ENCODE measurements at regions of chr3 and their contacts with region 1.

Region 1: DNA sequence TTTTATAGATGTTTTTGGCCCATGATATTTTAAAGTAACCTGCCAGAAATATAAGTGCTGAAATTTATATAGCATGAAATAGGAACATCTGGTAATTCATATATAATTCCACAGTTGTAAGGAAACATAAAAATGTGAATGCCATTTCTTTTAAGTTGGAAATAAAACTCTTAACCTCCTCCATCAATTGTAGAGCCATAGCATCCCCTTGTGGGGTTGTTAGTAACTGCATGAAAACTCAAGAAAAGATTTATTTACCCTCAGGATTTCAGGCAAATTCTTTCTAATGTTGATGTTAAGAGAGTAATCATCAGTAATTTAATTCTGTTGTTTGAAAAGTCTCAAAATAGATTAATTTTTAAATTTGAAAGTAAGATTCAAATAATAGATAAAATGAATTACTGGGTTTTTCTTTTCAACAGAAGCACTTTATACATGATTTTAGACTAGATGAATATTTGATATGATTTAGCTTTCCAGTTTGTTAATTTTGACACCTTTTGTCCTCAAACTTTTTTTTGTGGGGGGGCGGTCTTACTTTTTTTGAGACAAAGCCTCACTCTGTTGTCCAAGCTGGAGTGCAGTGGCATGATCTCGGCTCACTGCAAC is 74.7 kb downstream of the RASA2 start:
- DNase-seq: peak; percentile 36

Region 2: DNA sequence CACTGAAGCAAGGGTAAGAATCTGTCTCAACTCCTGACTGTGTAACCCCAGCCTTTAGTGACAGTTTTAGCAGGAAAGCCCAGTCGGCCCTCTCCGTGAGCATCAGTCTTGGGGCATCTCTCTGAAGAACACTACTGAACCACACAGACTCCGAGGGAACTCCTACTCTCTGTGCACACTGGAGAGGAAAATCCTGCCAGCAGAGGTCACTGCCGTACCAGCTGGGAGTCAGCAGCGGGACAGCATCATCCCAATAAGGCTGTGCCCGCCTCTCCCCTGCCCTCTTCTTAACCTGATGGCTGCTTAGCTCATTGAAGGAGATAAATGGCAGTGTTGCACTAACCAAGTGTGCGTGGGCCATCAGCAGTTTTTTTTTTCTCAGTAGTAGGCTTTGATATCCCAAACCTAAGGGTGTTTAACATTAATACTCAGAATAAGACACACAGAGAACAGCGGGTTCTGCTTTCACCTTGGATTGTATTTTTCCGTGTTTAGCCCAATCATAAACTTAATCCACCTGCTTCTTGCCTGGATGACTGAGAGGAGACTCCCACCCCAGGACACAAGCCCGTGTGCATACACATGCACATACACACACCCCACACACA is 101.3 kb before region 1 on chr3:
- CTCF ChIA-PET with region 1: interaction called, 28 read pairs
- POLR2A ChIA-PET with region 1: no interaction called
- DNase-seq: peak; percentile 86

Region 3: GRCh38 chr3:141487521-141488252 is 73.8 kb before region 1 on chr3:
- CTCF ChIA-PET with region 1: no interaction called
- POLR2A ChIA-PET with region 1: interaction called, 12 read pairs
- DNase-seq: peak; percentile 69

Region 4: DNA sequence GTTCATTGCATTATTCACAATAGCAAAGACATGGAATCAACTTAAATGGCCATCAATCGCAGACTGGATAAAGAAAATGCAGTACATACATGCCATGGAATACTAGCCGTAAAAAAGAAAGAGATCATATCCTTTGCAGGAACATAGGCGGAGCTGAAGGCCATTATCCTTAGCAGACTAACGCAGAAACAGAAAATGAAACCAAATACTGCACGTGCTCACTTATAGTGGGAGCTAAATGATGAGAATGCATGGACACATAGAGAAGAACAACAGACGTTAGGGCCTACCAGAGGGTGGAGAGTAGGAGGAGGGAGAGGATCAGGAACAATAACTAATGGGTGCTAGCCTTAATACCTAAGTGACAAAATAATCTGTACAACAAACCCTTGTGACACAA is 16.8 kb before region 1 on chr3:
- CTCF ChIA-PET with region 1: no interaction called
- POLR2A ChIA-PET with region 1: no interaction called
- DNase-seq: no peak

Region 5: DNA sequence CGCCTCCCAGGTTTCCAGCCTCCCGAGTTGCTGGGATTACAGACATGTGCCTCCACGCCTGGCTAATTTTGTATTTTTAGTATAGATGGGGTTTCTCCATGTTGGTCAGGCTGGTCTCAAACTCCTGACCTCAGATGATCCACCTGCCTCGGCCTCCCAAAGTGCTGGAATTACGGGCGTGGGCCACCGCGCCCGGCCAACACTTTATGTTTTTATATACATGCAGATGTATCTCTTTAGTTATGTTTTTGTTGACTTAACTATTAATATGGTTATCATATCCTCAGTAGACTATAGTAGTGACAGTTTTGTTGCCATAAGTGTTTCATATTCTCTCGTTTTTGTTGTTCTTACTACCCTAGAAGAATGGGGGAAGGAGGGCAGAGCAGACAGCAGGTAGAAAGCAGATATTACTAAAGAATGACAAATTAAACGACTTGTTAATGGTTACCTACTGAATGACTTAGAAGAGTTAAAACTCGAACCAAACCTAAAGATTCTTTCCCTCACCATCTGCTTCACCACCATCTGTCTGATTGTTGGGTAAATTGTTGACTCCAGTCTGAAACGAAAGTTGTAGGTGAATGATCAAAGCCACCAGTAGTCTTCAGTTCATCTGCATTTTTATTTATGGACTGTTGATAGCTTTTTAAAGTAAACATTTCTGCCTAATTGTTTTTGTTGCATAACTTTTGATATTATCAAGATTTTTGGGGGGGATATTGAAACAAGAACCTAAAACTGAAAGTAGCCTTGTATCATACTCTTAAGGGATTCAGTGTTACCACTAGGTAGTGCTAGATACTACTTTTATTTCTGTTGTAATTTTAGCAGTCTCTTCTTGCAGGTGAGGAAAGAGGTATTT is 14.6 kb after region 1 on chr3:
- CTCF ChIA-PET with region 1: no interaction called
- POLR2A ChIA-PET with region 1: no interaction called
- DNase-seq: no peak

Region 6: GRCh38 chr3:141876381-141876890 is 314.9 kb after region 1 on chr3 and contains the start of gene ATP1B3:
- CTCF ChIA-PET with region 1: no interaction called
- POLR2A ChIA-PET with region 1: no interaction called
- DNase-seq: peak; percentile 82

Region 7: DNA sequence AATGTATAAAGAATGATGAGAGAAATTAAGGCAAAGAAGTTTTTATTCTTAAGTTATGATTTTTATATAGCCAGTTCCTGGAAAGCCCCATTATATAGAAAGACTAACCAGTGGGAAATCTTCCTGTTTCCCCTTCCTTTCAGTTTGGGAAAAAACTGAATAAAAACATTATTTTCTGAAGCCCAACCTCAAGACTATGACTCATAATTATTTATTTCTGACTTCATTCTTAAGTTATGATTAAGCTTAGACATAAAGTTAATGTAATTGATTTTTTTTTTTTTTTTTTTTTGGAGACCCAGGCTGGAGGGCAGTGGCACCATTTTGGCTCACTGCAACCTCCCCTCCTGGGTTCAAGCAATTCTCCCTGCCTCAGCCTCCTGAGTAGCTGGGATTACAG is 1218.1 kb after region 1 on chr3:
- CTCF ChIA-PET with region 1: no interaction called
- POLR2A ChIA-PET with region 1: no interaction called
- DNase-seq: no peak